OCI-LY7 (cell line): ENCODE measurements at regions of chrX and their contacts with region 1.

Region 1: DNA sequence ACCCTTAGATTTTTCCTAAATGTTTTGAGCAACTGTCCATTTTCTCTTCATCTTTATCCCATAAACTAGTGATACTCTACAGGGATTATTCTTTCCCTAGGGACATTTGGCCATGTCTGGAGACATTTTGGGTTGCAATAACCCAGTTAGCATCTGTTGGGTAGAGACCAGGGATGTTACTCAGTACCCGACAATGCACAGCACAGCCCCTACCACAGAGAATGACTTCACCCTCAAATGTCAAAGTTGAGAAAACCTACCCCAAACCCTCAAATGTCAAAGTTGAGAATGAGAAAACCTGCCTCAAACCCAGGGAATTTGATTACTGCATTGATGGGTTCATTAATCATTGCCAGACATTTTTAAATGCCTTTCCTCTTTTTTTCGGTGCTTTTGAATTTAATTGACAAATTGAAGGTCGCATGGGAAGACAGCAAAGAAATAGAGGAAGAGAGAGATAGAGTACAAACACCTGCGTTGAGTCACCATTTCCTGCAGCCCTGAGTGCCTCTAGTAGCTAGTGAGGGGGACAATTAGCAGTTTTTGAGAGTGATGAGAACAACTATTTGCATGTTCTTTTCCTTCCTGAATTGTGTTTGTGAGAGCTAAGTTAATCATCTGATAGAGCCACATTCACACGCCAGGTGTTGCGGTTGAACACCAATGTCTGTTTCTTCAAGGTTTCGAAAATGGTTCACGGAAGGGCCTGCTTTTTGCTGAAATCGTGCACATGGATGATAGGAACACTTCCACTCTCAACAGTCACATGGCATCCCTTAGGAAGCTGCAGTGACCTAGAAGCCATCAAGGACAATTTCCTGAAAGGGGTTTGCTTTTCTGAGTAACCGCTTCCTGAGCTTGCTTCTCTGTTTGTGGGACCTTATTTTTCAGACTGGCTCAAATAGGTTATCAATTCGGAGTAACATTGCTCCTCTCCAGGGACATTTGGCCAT is 203.9 kb upstream of the VCX3A start:
- DNase-seq: peak; percentile 88
- H3K4me3 ChIP-seq: peak overlapping the region; percentile 38
- H3K27ac ChIP-seq: peak overlapping the region; percentile 82
- H3K4me1 ChIP-seq: peaks cover 37% of the 10 kb centered on the region
- CTCF ChIP-seq: no peak

Region 2: GRCh38 chrX:4764888-4765287 is 1973.9 kb before region 1 on chrX:
- CTCF ChIA-PET with region 1: no interaction called
- POLR2A ChIA-PET with region 1: no interaction called
- intact Hi-C with region 1: loop called (anchors 10 kb)
- DNase-seq: no peak
- H3K4me3 ChIP-seq: no peak overlapping the region
- H3K27ac ChIP-seq: no peak overlapping the region
- H3K4me1 ChIP-seq: peaks cover 6% of the 10 kb centered on the region
- CTCF ChIP-seq: no peak

Region 3: GRCh38 chrX:6694977-6695376 is 43.8 kb before region 1 on chrX:
- CTCF ChIA-PET with region 1: no interaction called
- POLR2A ChIA-PET with region 1: no interaction called
- intact Hi-C with region 1: no loop called
- DNase-seq: no peak
- H3K4me3 ChIP-seq: no peak overlapping the region
- H3K27ac ChIP-seq: no peak overlapping the region
- H3K4me1 ChIP-seq: no peaks in the 10 kb centered on the region
- CTCF ChIP-seq: no peak

Region 4: DNA sequence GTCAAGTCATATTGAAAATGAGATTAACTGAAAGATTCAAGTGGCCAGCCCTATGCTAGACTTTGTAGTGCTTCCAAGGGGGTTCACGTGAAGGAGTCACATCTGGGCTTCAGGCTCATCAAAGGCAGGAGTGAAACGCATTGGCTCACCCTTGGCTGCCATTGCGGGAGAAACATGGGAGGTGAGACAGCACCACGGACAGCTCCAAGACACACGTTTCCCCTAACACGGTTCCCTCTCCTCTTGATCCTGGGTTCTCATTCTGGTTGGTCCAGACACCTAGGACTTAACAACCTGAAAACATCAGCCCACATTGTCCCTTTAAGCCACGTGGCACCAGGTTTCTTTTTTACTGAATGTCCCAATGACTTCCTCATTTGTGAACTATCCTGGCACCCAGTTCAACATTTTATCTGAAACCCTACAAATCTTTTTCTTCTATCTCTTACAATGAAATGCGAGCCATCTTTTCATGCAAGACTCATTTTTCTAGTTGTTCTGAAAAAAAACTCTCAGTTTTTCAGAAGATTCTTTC is 75.1 kb after region 1 on chrX:
- CTCF ChIA-PET with region 1: no interaction called
- POLR2A ChIA-PET with region 1: no interaction called
- intact Hi-C with region 1: no loop called
- DNase-seq: no peak
- H3K4me3 ChIP-seq: no peak overlapping the region
- H3K27ac ChIP-seq: no peak overlapping the region
- H3K4me1 ChIP-seq: no peaks in the 10 kb centered on the region
- CTCF ChIP-seq: no peak

Region 5: GRCh38 chrX:6849716-6850414 is 111.1 kb after region 1 on chrX:
- CTCF ChIA-PET with region 1: no interaction called
- POLR2A ChIA-PET with region 1: no interaction called
- intact Hi-C with region 1: loop called (anchors 5 kb)
- DNase-seq: no peak
- H3K4me3 ChIP-seq: no peak overlapping the region
- H3K27ac ChIP-seq: no peak overlapping the region
- H3K4me1 ChIP-seq: peaks cover 33% of the 10 kb centered on the region
- CTCF ChIP-seq: no peak